CD4-positive, alpha-beta T cell (primary cell): ENCODE measurements at regions of chr6 and their contacts with region 1.

Region 1: GRCh38 chr6:128655978-128656498 is 135.6 kb upstream of the PTPRK start:
- DNase-seq: no peak
- ATAC-seq: no peak
- H3K4me3 ChIP-seq: no peak overlapping the region
- H3K4me3 Mint-ChIP-seq: no peak overlapping the region
- H3K27ac ChIP-seq: no peak overlapping the region
- H3K27ac Mint-ChIP-seq: no peak overlapping the region
- H3K4me1 ChIP-seq: no peaks in the 10 kb centered on the region
- H3K4me1 Mint-ChIP-seq: no peaks in the 10 kb centered on the region
- H3K27me3 ChIP-seq: peaks cover 0 to 5% of the 10 kb centered on the region in 2 experiments
- H3K27me3 Mint-ChIP-seq: peaks cover 9% of the 10 kb centered on the region
- CTCF ChIP-seq: no peak

Region 2: GRCh38 chr6:128605961-128606360 is 50.1 kb before region 1 on chr6:
- CTCF ChIA-PET with region 1: no interaction called
- POLR2A ChIA-PET with region 1: no interaction called
- intact Hi-C with region 1: loop called in 1 of 2 experiments (anchors 1 kb)
- DNase-seq: no peak
- ATAC-seq: no peak
- H3K4me3 ChIP-seq: no peak overlapping the region
- H3K4me3 Mint-ChIP-seq: no peak overlapping the region
- H3K27ac ChIP-seq: no peak overlapping the region
- H3K27ac Mint-ChIP-seq: no peak overlapping the region
- H3K4me1 ChIP-seq: no peaks in the 10 kb centered on the region
- H3K4me1 Mint-ChIP-seq: no peaks in the 10 kb centered on the region
- H3K27me3 ChIP-seq: no peaks in the 10 kb centered on the region
- H3K27me3 Mint-ChIP-seq: peaks cover 6% of the 10 kb centered on the region
- CTCF ChIP-seq: no peak

Region 3: DNA sequence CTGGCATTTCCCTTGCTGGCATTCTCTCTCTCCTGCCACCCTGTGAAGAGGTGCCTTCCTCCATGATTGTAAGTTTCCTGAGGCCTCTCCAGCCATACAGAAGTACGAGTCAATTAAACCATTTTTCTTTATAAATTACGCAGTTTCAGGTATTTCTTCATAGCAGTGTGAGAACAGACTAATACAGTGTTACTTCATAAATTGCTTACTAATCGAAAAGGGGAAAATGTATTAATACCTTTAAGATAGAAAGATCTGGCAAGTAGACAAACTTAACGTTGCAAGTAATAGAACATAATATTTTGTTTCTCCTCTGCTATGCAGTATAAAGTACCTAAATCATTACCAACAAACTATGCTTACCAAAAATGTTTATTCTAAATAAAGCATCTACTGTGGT is 48.6 kb after region 1 on chr6:
- CTCF ChIA-PET with region 1: no interaction called
- POLR2A ChIA-PET with region 1: no interaction called
- intact Hi-C with region 1: no loop called
- DNase-seq: no peak
- ATAC-seq: no peak
- H3K4me3 ChIP-seq: no peak overlapping the region
- H3K4me3 Mint-ChIP-seq: no peak overlapping the region
- H3K27ac ChIP-seq: no peak overlapping the region
- H3K27ac Mint-ChIP-seq: no peak overlapping the region
- H3K4me1 ChIP-seq: no peaks in the 10 kb centered on the region
- H3K4me1 Mint-ChIP-seq: no peaks in the 10 kb centered on the region
- H3K27me3 ChIP-seq: no peaks in the 10 kb centered on the region
- H3K27me3 Mint-ChIP-seq: peaks cover 12% of the 10 kb centered on the region
- CTCF ChIP-seq: no peak

Region 4: GRCh38 chr6:128725271-128726233 is 69.5 kb after region 1 on chr6:
- CTCF ChIA-PET with region 1: no interaction called
- POLR2A ChIA-PET with region 1: no interaction called
- intact Hi-C with region 1: no loop called
- DNase-seq: peak in 5 of 14 experiments; percentile 1 to 33 (median 26)
- ATAC-seq: no peak
- H3K4me3 ChIP-seq: no peak overlapping the region
- H3K4me3 Mint-ChIP-seq: no peak overlapping the region
- H3K27ac ChIP-seq: no peak overlapping the region
- H3K27ac Mint-ChIP-seq: no peak overlapping the region
- H3K4me1 ChIP-seq: no peaks in the 10 kb centered on the region
- H3K4me1 Mint-ChIP-seq: no peaks in the 10 kb centered on the region
- H3K27me3 ChIP-seq: peaks cover 0 to 11% of the 10 kb centered on the region in 2 experiments
- H3K27me3 Mint-ChIP-seq: peaks cover 37% of the 10 kb centered on the region
- CTCF ChIP-seq: peak; percentile 63